Uterus (tissue), 4 donors: ENCODE measurements at regions of chr16 and their contacts with region 1.

Region 1: DNA sequence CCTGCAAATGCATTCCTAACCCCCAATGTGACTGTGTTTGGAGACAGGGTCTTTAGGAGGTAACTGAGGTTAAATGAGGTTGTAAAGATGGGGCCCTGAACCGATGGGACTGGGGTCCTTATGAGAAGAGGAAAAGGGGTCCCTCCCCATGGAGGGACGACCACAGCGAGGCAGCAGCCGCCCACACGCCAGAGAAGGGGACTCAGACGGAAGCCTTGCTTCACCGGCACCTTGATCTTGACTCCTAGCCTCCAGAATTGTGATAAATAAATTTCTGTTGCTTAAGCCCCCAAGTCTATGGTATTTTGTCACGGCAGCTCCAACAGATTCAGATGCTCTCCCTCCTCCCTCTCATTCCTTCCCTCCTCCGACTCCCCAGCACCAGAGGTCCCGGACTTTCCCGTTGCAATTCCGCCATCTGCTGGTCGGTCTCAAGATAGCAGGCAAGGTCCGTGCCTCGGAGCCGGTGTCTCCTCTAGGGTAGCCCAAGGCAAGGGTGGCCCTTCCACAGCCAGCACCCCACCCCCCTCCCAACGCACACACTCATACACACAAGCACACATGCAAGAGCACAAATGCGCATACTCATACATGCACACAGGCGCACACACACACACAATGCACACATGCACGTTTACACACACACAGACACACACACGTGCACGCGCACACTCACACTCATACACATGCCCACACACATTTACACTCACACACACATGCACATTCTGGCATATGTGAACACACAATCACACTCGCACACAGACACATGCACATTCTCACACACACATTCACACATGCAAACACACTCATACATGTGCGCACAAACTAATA is 23.1 kb upstream of the C16orf78 start:
- DNase-seq: peak; percentile 37 to 56
- H3K4me3 ChIP-seq: no peak overlapping the region
- H3K27ac ChIP-seq: no peak overlapping the region
- H3K4me1 ChIP-seq: no peaks in the 10 kb centered on the region
- H3K27me3 ChIP-seq: no peaks in the 10 kb centered on the region
- CTCF ChIP-seq: peak; percentile 68 to 87 (median 72)
- POLR2A ChIP-seq: no peak

Region 2: DNA sequence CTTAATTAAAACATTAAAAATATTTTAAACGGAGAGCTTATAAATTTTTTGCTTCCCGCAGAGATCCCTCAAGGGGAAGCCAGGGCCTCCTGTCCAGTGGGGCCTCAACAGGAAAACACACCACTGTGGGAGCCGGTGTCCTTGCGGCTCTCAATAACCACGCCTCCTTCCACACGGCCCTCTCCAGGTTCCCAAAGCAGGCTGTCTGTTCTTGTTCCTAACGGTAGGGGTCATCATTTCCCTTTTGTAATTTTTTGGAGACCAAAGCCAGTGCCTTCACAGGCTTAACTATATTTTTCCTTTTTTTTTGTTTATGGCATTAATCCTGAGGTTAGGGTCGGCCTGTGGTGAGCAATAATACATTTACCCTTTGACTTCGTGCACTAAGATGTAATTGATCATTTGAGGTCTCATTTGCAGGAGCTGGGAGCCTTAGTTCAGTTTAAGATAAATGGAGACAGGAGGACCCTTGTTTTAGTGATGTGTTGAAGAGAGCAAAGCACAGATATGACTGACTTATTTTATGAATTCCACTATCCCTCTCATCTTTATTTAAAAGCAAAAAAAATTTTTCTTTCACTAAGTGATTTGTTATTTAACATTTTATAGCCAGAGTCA is 663.0 kb before region 1 on chr16:
- intact Hi-C with region 1: loop called (anchors 5 kb)
- DNase-seq: peak; percentile 18 to 27
- H3K4me3 ChIP-seq: no peak overlapping the region
- H3K27ac ChIP-seq: no peak overlapping the region
- H3K4me1 ChIP-seq: no peaks in the 10 kb centered on the region
- H3K27me3 ChIP-seq: no peaks in the 10 kb centered on the region
- CTCF ChIP-seq: peak; percentile 64 to 72 (median 69)
- POLR2A ChIP-seq: no peak

Region 3: DNA sequence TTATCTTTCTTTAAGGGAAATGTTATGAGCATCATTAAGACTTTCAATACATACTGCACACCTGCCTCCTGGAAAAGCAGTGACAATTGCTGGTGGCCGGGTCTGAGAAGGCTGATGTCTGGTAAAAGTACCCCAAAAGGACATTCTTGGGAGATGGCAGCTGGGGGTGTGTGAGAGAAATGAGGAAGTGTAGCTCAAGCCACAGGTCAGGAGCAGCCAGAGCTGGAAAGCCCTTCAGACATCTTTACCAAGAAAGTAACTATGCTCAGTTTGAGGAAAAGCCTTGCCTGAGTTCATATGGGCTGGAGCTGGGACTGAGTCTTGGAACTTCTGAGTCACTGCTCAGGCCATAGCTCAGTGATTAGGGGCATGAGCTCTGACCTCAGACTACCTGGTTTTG is 645.8 kb before region 1 on chr16:
- intact Hi-C with region 1: loop called (anchors 5 kb)
- DNase-seq: no peak
- H3K4me3 ChIP-seq: no peak overlapping the region
- H3K27ac ChIP-seq: no peak overlapping the region
- H3K4me1 ChIP-seq: no peaks in the 10 kb centered on the region
- H3K27me3 ChIP-seq: no peaks in the 10 kb centered on the region
- CTCF ChIP-seq: no peak
- POLR2A ChIP-seq: no peak

Region 4: GRCh38 chr16:49292413-49292812 is 58.1 kb before region 1 on chr16:
- intact Hi-C with region 1: no loop called
- DNase-seq: no peak
- H3K4me3 ChIP-seq: no peak overlapping the region
- H3K27ac ChIP-seq: no peak overlapping the region
- H3K4me1 ChIP-seq: no peaks in the 10 kb centered on the region
- H3K27me3 ChIP-seq: peaks cover 0 to 8% of the 10 kb centered on the region in 2 donors
- CTCF ChIP-seq: no peak
- POLR2A ChIP-seq: no peak